Transverse colon (tissue), 4 donors: ENCODE measurements at regions of chr4 and their contacts with region 1.

Region 1: DNA sequence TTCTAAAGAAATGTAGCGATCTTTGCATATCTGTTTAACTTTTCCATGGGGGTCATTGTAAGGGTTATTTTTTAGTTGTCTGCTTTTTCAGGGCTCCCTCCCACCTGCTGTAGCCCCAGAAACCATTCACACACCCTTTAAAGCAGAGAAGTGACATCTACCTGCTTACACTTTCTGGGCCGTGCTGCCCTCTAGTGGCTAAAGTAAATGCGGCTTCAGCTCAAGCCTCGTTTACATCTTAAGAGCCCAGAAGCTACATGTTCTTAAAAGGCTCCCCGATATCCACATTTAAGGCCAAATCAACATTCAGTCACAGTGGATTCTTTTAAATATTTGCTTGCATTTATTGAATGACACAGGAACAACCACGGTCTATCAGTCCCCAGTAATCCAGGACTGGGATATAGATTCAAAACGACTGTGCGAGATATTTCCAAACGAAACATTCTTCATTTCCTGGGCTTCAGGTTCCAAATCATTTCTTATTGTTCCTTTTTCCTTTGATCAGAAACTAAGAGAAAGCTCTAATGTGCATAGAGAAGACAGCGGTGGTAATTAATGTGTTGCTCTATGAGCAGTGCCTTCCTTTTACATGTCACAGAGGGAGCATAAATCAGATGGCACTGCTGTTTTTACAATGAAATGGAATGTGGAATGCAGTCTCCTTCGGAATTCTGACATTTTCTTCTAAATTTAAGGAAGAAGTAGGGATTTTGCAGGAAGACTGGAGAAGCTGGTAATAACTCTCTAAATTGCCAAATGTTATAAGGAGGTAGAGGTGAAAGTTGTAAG is 119.9 kb downstream of the RASGEF1B start:
- DNase-seq: peak; percentile 81
- H3K4me3 ChIP-seq: no peak overlapping the region
- H3K27ac ChIP-seq: no peak overlapping the region
- H3K4me1 ChIP-seq: peaks cover 0 to 6% (median 0%) of the 10 kb centered on the region in 4 donors
- H3K27me3 ChIP-seq: no peaks in the 10 kb centered on the region
- CTCF ChIP-seq: peak; percentile 76 to 94 (median 82)
- EP300 ChIP-seq: no peak
- POLR2A ChIP-seq: no peak

Region 2: GRCh38 chr4:80202190-80202711 is 1149.6 kb before region 1 on chr4:
- in situ Hi-C with region 1: no loop called
- intact Hi-C with region 1: no loop called
- DNase-seq: peak; percentile 89
- H3K4me3 ChIP-seq: peak overlapping the region; percentile 61 to 90 (median 80)
- H3K27ac ChIP-seq: peak overlapping the region; percentile 87 to 95 (median 90)
- H3K4me1 ChIP-seq: peaks cover 0 to 25% (median 16%) of the 10 kb centered on the region in 4 donors
- H3K27me3 ChIP-seq: peaks cover 62% of the 10 kb centered on the region
- CTCF ChIP-seq: peak; percentile 84 to 90 (median 89)
- EP300 ChIP-seq: no peak
- POLR2A ChIP-seq: no peak

Region 3: DNA sequence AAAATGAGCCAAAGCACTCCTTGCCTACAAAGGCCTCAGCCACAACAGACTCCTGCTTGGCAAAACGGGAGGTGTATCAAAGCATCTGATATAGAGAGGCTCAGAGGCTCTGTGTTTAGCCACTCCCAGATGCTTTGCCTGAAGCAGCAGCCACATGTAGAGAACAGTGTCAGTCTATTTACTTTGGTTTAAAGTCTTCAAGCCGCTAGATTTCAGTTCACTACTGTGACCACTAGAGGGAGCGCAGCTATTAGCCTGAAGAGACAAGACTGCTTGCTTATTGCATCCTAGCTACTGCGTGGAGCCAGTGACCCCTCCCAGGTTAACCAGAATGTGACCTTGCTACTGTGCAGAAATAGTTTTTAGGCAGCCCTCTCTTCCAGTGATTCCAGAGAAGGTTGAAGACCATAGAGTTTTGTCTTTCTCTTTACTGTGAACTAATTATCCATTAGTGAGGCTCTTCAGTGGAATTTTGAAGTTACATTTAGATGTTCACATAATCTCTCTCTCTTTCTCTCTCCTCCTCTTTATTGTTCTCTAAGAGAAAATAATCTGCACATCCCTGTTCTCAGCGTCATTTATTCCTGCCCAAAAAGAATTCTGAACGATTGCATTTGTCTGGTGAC is 282.0 kb before region 1 on chr4:
- in situ Hi-C with region 1: loop called in 3 of 4 experiments (anchors 5 to 10 kb)
- intact Hi-C with region 1: no loop called
- DNase-seq: peak; percentile 73
- H3K4me3 ChIP-seq: no peak overlapping the region
- H3K27ac ChIP-seq: no peak overlapping the region
- H3K4me1 ChIP-seq: no peaks in the 10 kb centered on the region
- H3K27me3 ChIP-seq: no peaks in the 10 kb centered on the region
- CTCF ChIP-seq: peak; percentile 80 to 94 (median 91)
- EP300 ChIP-seq: no peak
- POLR2A ChIP-seq: no peak

Region 4: GRCh38 chr4:81512757-81513501 is 161.1 kb after region 1 on chr4:
- in situ Hi-C with region 1: no loop called
- intact Hi-C with region 1: no loop called
- DNase-seq: no peak
- H3K4me3 ChIP-seq: no peak overlapping the region
- H3K27ac ChIP-seq: no peak overlapping the region
- H3K4me1 ChIP-seq: peaks cover 0 to 6% (median 0%) of the 10 kb centered on the region in 4 donors
- H3K27me3 ChIP-seq: no peaks in the 10 kb centered on the region
- CTCF ChIP-seq: no peak
- EP300 ChIP-seq: no peak
- POLR2A ChIP-seq: no peak